Activated CD8-positive, alpha-beta memory T cell treated with anti-CD3 and anti-CD28 coated beads, Interleukin-2, amount 10 ng/mL, durations not matched to agents 7 days and 5 days (primary cell): ENCODE measurements at regions of chr11 and their contacts with region 1.

Region 1: DNA sequence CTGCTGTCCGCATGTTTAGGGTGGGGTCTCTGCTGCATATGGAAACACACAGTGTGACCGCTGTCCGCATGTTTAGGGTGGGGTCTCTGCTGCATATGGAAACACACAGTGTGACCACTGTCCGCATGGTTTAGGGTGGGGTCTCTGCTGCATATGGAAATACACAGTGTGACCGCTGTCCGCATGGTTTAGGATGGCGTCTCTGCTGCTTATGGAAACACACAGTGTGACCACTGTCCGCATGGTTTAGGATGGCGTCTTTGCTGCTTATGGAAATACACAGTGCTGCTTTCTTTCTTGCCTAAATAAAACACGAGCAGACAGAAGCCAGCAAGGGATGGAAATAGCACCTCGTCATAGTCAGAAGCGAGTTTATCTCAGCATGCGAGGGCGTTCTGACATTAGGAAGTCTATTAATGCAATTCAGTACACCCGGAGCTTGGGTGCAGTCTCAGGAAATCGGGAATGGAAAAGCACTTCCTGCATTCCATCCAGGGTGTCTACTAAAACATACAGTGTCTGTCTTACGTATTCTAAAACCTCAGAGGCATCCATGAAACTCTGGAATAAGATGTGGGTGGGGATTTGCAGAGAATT is 32.6 kb upstream of the TOLLIP start:
- DNase-seq: peak; percentile 31
- ATAC-seq: no peak
- H3K4me3 Mint-ChIP-seq: no peak overlapping the region
- H3K27ac Mint-ChIP-seq: no peak overlapping the region
- H3K4me1 Mint-ChIP-seq: peaks cover 22% of the 10 kb centered on the region
- H3K27me3 Mint-ChIP-seq: peaks cover 8% of the 10 kb centered on the region

Region 2: DNA sequence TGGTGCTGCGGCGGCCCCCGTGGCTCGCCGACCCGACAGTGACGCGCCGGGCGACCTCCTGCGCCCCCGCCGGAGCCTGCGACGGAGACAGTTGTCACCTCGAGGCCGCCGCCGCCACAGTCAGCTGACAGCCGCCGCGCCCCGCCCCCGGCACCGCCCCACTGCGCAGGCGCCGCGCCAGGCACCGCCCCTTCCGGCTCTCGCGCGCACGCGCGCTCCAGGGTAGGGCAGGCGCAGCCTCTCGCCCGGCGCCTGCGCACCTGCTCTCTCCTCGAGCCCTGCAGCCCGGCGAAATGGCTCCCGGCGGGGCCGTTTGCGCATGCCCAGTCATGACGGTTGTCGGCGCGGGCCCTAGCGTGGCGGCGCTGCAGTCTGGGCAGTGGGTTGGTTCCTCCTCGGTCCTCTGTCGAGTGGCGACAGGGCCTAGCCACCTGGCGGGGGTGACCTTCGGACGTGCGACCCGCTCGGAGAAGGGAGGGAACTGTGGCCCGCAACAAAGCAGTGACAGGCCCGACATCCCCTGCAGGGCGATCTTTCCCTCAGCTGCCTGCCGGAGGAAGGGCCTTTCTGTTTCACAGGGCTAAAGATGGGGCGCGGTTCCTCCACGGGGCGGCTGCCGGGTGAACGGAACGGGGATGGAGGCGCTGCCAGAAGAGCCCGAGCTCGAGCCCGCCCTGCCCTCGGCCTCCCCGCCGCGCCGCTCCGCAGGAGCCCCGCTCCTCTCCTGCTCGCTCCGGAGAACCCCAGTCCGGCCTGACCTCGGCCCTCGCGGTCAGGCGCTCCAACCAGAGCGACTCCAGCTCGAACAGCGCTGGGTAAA is 32.3 kb before region 1 on chr11 and contains the start of gene TOLLIP:
- CTCF ChIA-PET with region 1: interaction called, 10 read pairs
- DNase-seq: peak; percentile 97
- ATAC-seq: peak; percentile 90
- H3K4me3 Mint-ChIP-seq: peak within 1 kb of the TSS; percentile 88
- H3K27ac Mint-ChIP-seq: peak within 1 kb of the TSS; percentile 96
- H3K4me1 Mint-ChIP-seq: peaks cover 29% of the 10 kb centered on the region
- H3K27me3 Mint-ChIP-seq: peaks cover 12% of the 10 kb centered on the region
- total RNA-seq, gene TOLLIP: 33.3 to 35.8 TPM

Region 3: DNA sequence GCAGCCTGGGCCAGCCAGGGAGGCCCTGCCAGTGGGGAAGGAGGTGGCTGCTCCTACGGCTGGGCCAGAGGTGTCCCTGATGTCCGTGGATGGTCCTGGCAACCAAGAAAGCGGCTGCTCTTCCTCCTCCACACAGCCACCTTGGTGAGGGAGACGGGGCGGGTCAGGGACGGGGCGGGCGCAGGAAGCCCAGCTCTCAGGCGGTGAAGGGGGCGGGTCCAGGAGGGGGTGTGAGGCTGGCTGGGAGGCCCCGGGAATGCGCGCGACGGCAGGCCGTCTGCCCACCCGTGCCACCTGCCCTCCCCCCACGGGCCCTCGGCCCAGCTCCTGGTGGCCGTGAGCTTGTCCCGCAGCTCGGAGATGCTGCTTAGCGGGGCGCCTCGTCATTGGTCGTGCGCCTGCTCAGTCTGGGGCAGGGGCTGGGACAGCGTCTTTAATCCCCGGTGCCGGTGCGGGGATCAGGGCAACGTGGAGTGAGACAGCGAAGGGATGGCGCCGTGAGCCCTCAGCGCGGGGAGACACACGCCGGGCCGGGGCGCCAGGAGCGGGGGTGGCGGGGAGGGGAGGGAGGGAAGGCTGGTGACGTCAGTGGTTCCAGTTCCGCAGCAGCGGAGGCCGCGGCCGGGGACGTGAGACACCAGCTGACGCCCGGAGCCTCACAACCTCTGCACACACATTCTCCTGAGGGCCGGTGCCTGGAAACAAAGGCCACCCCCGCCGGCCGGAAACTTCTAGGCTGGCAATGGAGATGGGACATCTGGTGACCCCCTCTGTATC is 41.0 kb after region 1 on chr11:
- CTCF ChIA-PET with region 1: no interaction called
- DNase-seq: peak; percentile 83
- ATAC-seq: peak; percentile 91
- H3K4me3 Mint-ChIP-seq: peak overlapping the region; percentile 67
- H3K27ac Mint-ChIP-seq: peak overlapping the region; percentile 74
- H3K4me1 Mint-ChIP-seq: peaks cover 11% of the 10 kb centered on the region
- H3K27me3 Mint-ChIP-seq: peaks cover 37% of the 10 kb centered on the region